Dorsolateral prefrontal cortex (tissue), 120 donors: ENCODE measurements at regions of chr14 and their contacts with region 1.

Region 1: DNA sequence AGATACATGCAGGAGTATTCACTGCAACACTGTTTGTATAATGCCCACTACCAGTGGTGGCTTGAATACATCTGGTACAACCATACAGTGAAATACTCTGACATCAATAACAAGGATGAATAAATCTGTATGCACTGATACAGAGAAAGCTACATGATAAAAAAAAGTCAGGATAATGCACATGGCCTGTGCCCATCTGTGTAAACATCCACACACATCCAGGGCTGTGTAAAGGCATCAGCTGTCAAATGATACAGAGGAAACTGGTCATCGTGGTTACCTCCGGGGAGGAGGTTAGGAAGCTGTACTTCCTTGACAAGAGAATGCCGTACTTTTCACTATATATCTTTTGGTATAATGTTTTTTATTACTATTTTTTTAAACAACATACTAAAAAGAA is 176.6 kb downstream of the FOXN3 start:
- DNase-seq: no peak
- H3K4me3 ChIP-seq: no peak overlapping the region
- H3K27ac ChIP-seq: no peak overlapping the region
- H3K27me3 ChIP-seq: no peaks in the 10 kb centered on the region
- CTCF ChIP-seq: no peak

Region 2: GRCh38 chr14:89399594-89400068 is 159.2 kb after region 1 on chr14:
- intact Hi-C with region 1: loop called in 1 of 2 experiments (anchors 10 kb)
- DNase-seq: peak in 3 of 10 donors; percentile 37 to 49 (median 41)
- H3K4me3 ChIP-seq: peak overlapping the region; percentile 0 to 68 (median 48)
- H3K27ac ChIP-seq: peak overlapping the region in 26 of 59 donors; percentile 0 to 71 (median 30)
- H3K27me3 ChIP-seq: no peaks in the 10 kb centered on the region
- CTCF ChIP-seq: no peak